ENCODE measurements at regions of chr19 and their contacts with region 1.

Region 1: DNA sequence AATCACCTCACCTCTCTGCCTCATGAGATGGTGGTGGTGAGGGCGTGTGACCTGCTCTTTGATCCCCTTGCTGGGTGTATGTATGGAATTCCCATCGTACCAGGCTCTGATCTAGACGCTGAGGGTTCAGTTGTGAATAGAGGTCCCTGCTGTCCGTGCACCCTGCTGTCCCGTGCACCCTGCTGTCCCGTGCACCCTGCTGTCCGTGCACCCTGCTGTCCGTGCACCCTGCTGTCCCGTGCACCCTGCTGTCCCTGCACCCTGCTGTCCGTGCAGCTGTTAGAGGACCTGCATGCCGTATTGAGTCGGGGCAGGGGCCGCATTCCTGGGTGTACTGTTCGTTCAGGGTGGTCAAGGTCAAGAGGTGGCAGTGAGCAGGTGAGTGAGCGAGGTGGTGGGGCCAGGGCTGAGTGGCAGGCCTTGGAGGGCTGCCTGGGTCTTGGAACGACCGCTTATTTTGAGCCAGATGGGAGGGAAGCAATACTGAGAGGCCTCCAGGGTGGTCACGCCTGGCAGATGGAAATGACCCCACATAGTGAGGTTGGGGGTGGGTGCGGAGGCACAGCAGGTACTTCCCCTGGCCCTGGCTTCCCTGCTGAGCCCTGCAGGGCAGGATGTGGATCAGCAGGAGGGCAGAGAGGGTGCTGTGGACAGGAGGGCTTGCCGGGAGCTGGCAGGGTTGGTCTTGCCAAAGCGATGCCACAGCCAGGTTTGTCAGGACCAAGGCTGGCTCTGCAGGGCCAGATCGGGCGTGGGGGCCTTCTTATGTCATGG is 4.6 kb upstream of the EPN1 start:
- DNase-seq: no peak
- H3K4me3 ChIP-seq: no peak overlapping the region
- H3K27ac ChIP-seq: no peak overlapping the region
- H3K27me3 ChIP-seq: no peaks in the 10 kb centered on the region
- CTCF ChIP-seq: no peak

Region 2: DNA sequence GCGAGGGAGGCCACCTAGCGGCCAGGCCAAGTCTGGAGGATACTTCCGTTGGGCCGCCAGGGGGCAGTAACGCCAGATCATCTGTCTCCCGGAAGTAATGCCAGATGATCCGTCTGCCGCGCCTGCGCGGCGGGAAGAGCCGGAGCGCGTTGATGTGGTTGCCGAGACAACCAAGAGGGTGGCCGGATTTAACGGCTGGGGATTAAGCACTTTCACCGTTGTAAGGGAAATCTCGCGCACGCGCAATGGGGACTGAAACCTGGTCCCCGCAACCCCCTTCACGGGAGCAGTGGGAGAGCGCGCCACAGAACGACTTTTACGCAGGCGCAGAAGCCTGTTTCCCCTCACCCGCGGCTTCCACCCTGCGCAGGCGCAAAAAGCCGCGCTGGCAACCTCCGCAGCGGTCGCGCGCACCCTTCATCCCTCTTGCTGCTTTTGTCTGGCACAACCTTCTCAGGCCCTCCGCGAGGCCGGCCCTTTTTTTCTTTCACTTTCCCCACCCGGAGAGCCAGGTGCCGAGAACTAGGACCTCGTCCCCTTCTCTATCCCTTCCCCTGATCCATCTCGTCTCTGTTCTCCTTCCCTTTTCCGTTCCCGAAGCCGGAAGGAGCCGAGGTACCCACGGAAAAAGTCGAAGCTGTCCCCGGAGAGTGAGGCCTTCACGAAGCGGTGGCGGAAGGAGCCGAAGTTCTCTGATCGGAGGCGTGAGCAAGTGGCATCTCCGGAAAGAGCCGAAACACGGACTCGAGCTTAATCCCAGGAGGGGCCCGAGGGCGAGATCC is 16.5 kb before region 1 on chr19:
- CTCF ChIA-PET with region 1: interaction called, 13 read pairs
- POLR2A ChIA-PET with region 1: interaction called, 6 read pairs
- DNase-seq: peak; percentile 99
- H3K4me3 ChIP-seq: peak overlapping the region; percentile 92
- H3K27ac ChIP-seq: peak overlapping the region; percentile 97
- H3K27me3 ChIP-seq: no peaks in the 10 kb centered on the region
- CTCF ChIP-seq: peak; percentile 100